Pancreas (tissue), 10 donors: ENCODE measurements at regions of chr14 and their contacts with region 1.

Region 1: GRCh38 chr14:103847451-103848188 is at the start of gene PPP1R13B:
- DNase-seq: peak; percentile 93 to 99 (median 97)
- ATAC-seq: peak; percentile 94 to 98 (median 96)
- H3K4me3 ChIP-seq: peak within 1 kb of the TSS; percentile 56 to 80 (median 66)
- H3K27ac ChIP-seq: peak within 1 kb of the TSS; percentile 68 to 85 (median 83)
- H3K4me1 ChIP-seq: peaks cover 5 to 21% (median 9%) of the 10 kb centered on the region in 3 donors
- H3K27me3 ChIP-seq: no peaks in the 10 kb centered on the region
- CTCF ChIP-seq: no peak
- total RNA-seq, gene PPP1R13B: 20.9 to 33.9 (median 24.5) TPM

Region 2: DNA sequence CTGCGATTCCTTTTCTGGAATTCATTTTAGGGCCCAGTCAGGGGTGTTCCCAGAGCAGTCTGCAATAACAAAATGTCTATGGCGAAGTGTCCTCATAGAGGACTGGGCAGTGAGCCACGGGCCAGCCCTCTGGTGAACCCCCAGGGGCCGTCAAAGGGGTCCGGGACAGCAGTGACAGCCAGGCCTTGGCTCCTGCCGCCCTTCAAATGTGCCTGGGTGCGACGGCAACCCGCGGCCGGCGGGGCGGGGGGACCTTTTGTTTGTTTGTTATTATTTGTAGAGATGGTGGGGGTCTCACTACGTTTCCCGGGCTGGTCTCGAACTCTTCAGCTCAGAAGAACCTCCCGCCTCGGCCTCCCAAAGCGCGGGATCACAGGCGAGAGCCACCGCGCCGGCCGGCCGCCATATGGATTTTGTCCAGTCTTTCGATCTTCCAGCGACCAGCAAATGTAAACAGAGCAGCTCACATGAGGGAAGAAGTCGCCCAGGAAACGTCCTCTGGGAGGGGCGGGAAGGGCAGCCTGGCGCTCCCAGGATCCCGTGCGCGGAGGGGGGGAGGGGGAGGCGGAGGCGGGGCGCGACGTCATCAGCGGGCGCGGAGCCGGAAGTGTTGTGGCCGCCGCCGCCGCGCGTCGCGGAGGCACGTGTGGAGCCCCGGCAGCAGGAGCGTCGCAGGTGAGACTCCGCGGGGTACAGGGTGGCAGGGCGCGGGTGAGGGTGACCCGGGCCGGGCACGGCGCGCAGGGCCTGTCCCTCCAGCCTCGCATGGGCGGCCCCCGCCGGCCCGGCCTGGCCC is 318.8 kb before region 1 on chr14 and contains the start of gene TRMT61A:
- intact Hi-C with region 1: no loop called
- DNase-seq: peak; percentile 93 to 96 (median 94)
- ATAC-seq: peak; percentile 92 to 95 (median 94)
- H3K4me3 ChIP-seq: peak within 1 kb of the TSS; percentile 73 to 100 (median 94)
- H3K27ac ChIP-seq: peak within 1 kb of the TSS; percentile 68 to 90 (median 78)
- H3K4me1 ChIP-seq: peaks cover 6 to 32% (median 8%) of the 10 kb centered on the region in 3 donors
- H3K27me3 ChIP-seq: no peaks in the 10 kb centered on the region
- CTCF ChIP-seq: no peak
- total RNA-seq, gene TRMT61A: 3.3 to 10.4 (median 6.3) TPM

Region 3: GRCh38 chr14:103889313-103890051 is 41.9 kb after region 1 on chr14:
- intact Hi-C with region 1: loop called in 1 of 3 experiments (anchors 10 kb)
- DNase-seq: peak in 3 of 6 donors; percentile 54 to 82 (median 71)
- ATAC-seq: peak in 2 of 4 donors; percentile 11 to 44
- H3K4me3 ChIP-seq: no peak overlapping the region
- H3K27ac ChIP-seq: peak overlapping the region; percentile 28 to 89 (median 81)
- H3K4me1 ChIP-seq: peaks cover 24 to 37% (median 28%) of the 10 kb centered on the region in 3 donors
- H3K27me3 ChIP-seq: no peaks in the 10 kb centered on the region
- CTCF ChIP-seq: no peak

Region 4: DNA sequence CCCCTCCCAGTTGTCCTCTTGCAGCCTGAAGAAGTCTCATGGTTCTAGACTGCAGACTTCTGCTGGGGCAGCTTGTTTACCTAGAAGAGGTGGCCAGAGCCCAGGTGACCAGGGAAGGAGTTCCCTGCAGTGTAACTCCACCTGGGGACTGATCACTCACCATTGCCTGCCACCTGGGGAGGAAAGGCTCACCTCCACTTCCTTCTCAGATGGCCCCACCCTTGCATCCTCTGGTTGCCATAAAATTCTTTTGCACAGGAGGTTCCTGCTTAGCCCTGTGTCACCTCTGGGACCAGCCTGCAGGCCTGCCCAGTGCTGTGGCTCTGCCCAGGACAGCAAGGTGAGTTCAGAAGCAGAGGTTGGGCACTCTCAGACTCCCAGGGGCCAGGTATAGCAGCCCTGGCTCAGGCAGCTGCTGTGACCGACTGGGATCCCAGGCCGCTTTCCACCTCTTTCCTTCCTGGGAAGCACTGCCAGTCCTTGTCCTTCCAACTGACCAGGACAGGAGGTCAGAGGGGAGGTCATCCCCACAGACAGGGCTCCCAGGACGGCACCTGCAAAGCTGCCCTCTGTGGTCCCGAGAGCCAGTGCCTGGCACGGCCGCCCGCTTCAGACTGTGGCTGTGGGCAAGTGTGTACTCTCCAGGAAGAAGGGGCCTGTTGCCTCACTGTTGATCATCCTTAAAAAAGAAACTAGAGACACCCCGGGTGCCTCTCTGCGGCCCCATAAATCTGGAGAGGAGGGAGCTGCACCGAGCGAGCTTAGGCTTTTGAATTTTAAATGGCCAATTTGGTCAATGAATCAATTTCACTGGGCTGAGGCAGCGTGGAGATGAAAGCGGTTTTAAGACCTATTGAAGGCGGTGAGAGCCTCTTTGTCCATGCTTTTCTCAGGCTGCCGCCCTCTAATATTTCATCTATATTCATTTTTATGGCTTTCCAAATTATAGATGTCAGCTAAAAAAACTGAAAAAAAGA is 652.5 kb after region 1 on chr14:
- intact Hi-C with region 1: no loop called
- DNase-seq: no peak
- ATAC-seq: no peak
- H3K4me3 ChIP-seq: no peak overlapping the region
- H3K27ac ChIP-seq: no peak overlapping the region
- H3K4me1 ChIP-seq: no peaks in the 10 kb centered on the region
- H3K27me3 ChIP-seq: no peaks in the 10 kb centered on the region
- CTCF ChIP-seq: no peak